Esophagus muscularis mucosa (tissue), 4 donors: ENCODE measurements at regions of chr16 and their contacts with region 1.

Region 1: GRCh38 chr16:87492721-87493607 is at the start of gene ZCCHC14:
- DNase-seq: peak; percentile 99
- H3K4me3 ChIP-seq: peak within 1 kb of the TSS; percentile 57 to 75 (median 64)
- H3K27ac ChIP-seq: peak within 1 kb of the TSS; percentile 62 to 86 (median 76)
- H3K4me1 ChIP-seq: peaks cover 43 to 49% (median 47%) of the 10 kb centered on the region in 4 donors
- H3K27me3 ChIP-seq: no peaks in the 10 kb centered on the region
- CTCF ChIP-seq: no peak
- EP300 ChIP-seq: no peak
- POLR2A ChIP-seq: no peak
- total RNA-seq, gene ZCCHC14: 12.9 to 24.7 (median 18.6) TPM

Region 2: DNA sequence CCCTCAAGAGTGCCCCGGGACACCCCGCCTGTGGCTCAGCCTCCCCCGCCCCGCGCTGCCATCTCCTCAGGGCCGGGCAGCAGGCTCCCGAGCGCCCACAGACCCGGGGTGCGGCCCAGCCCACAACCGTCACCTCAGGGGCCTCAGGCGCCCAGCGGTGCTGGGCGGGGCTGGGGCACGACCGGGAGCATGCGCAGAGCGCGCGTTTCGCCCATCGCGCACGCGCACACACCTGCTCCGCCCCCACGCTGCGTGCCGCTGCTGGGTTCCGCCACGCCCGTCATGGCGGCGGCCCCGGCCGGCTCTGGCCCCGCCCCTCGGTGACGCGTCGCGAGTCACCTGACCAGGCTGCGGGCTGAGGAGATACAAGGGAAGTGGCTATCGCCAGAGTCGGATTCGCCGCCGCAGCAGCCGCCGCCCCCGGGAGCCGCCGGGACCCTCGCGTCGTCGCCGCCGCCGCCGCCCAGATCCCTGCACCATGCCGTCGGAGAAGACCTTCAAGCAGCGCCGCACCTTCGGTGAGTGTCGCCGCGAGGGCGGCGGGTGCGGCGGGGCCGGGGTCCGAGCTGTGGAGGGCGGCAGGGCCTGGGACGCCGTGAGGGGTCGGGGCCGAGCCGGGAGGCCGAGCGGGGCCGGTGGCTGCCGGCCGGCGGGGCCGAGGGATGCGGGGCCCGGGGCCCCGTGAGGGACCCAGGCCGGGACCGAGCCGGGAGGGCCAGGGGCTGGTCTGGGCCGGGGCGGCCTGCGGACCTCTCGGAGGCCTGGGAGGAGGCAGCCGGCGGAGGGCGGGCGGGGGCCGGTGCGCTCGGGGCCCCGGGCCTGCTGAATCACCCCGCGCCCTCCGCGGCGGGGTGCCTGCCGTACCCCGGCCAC is 100.8 kb before region 1 on chr16 and contains the start of gene MAP1LC3B:
- intact Hi-C with region 1: loop called (anchors 2 kb)
- DNase-seq: peak; percentile 99
- H3K4me3 ChIP-seq: peak within 1 kb of the TSS; percentile 77 to 92 (median 82)
- H3K27ac ChIP-seq: peak within 1 kb of the TSS; percentile 97 to 100 (median 99)
- H3K4me1 ChIP-seq: peaks cover 47 to 62% (median 54%) of the 10 kb centered on the region in 4 donors
- H3K27me3 ChIP-seq: no peaks in the 10 kb centered on the region
- CTCF ChIP-seq: no peak
- EP300 ChIP-seq: no peak
- POLR2A ChIP-seq: peak; percentile 94
- total RNA-seq, gene MAP1LC3B: 49.4 to 70.6 (median 57.9) TPM

Region 3: GRCh38 chr16:87451563-87452210 is 41.3 kb before region 1 on chr16:
- intact Hi-C with region 1: loop called (anchors 5 kb)
- DNase-seq: no peak
- H3K4me3 ChIP-seq: no peak overlapping the region
- H3K27ac ChIP-seq: no peak overlapping the region
- H3K4me1 ChIP-seq: peaks cover 0 to 21% (median 16%) of the 10 kb centered on the region in 4 donors
- H3K27me3 ChIP-seq: no peaks in the 10 kb centered on the region
- CTCF ChIP-seq: no peak
- EP300 ChIP-seq: no peak
- POLR2A ChIP-seq: no peak

Region 4: DNA sequence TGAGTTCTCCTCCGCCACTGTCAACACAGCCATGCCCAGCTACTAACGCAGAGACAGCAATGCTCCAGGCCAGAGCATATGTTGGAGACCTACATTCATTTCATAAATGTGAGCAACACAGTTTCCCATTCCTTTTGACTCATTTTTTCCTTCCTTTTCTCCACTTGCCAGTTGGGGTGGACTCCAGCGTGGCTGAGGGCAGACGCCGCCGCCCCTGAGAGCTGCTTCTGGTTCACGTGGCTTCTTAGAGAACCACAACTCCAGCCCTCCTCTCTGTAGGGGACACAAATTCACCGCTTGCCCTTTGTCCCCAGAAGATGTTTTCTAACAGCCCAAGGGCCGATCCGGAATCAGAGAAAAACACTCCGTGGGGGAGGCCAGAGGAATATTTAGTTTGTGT is 45.6 kb after region 1 on chr16:
- intact Hi-C with region 1: no loop called
- DNase-seq: no peak
- H3K4me3 ChIP-seq: no peak overlapping the region
- H3K27ac ChIP-seq: no peak overlapping the region
- H3K4me1 ChIP-seq: peaks cover 0 to 24% (median 13%) of the 10 kb centered on the region in 4 donors
- H3K27me3 ChIP-seq: peaks cover 0 to 60% (median 2%) of the 10 kb centered on the region in 4 donors
- CTCF ChIP-seq: no peak
- EP300 ChIP-seq: no peak
- POLR2A ChIP-seq: no peak

Region 5: DNA sequence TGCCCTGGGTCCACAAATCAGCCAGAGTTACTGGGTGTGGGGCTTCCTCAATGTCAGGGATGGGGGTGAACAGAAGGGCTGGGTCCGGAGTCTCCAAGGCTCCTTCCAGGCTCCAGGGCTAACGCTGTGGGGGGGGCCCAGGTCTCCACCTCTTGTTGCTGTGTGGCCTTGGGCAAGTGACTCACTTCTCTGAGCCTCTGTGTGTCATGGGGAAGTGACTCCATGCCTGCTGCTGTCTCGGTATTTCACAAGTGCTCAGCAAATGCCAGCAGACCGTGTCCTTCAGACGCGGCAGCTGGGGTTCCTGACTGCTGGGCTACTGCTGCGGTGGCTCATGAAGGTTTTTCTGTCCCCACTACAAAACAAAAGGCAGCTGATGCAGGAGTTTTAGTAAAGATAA is 136.0 kb after region 1 on chr16:
- intact Hi-C with region 1: no loop called
- DNase-seq: no peak
- H3K4me3 ChIP-seq: no peak overlapping the region
- H3K27ac ChIP-seq: no peak overlapping the region
- H3K4me1 ChIP-seq: no peaks in the 10 kb centered on the region
- H3K27me3 ChIP-seq: peaks cover 0 to 67% (median 0%) of the 10 kb centered on the region in 4 donors
- CTCF ChIP-seq: no peak
- EP300 ChIP-seq: no peak
- POLR2A ChIP-seq: no peak